ENCODE measurements at regions of chr3 and their contacts with region 1.

Region 1: GRCh38 chr3:111717601-111718000 is 122.5 kb upstream of the ZBED2 start:
- DNase-seq: peak; percentile 57 to 59
- H3K4me3 ChIP-seq: no peak overlapping the region
- H3K27ac ChIP-seq: no peak overlapping the region
- H3K4me1 ChIP-seq: no peaks in the 10 kb centered on the region
- H3K27me3 ChIP-seq: no peaks in the 10 kb centered on the region
- CTCF ChIP-seq: peak; percentile 60 to 98 (median 94)
- EP300 ChIP-seq: no peak
- POLR2A ChIP-seq: no peak
- RAD21 ChIP-seq: peak; percentile 99 to 100

Region 2: GRCh38 chr3:111691293-111691909 is 26.2 kb before region 1 on chr3:
- CTCF ChIA-PET with region 1: interaction called, 15 read pairs
- POLR2A ChIA-PET with region 1: no interaction called
- DNase-seq: no peak
- H3K4me3 ChIP-seq: no peak overlapping the region
- H3K27ac ChIP-seq: no peak overlapping the region
- H3K4me1 ChIP-seq: no peaks in the 10 kb centered on the region; a peak in 1 of 7 replicates
- H3K27me3 ChIP-seq: peaks cover 0 to 1% (median 0%) of the 10 kb centered on the region in 4 experiments; a peak in 1 of 7 replicates
- CTCF ChIP-seq: peak in 2 of 3 experiments; percentile 40 to 56; a peak in 3 of 4 replicates
- EP300 ChIP-seq: no peak
- POLR2A ChIP-seq: no peak
- RAD21 ChIP-seq: peak; percentile 66 to 75

Region 3: DNA sequence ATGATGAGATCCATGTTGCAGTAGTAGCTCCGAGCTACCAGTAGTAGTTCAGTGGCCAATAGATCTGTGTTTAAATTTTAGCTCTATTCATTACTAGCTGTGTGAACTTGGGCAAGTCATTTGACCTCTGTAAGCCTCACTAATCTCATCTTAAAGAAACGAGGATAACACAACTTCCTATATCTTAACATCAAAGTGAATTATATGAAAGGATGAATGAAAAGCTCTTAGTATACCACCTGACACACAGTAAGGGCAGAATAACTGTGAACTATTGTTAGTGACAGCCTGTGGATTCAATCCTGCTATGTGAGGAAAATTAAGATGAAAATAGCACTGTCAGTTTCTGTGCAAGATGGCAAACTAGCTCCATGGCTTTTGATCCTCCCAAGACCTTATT is 27.0 kb after region 1 on chr3:
- CTCF ChIA-PET with region 1: interaction called, 13 read pairs
- POLR2A ChIA-PET with region 1: no interaction called
- DNase-seq: no peak
- H3K4me3 ChIP-seq: no peak overlapping the region
- H3K27ac ChIP-seq: no peak overlapping the region
- H3K4me1 ChIP-seq: peaks cover 0 to 5% (median 0%) of the 10 kb centered on the region in 4 experiments; a peak in 2 of 7 replicates
- H3K27me3 ChIP-seq: no peaks in the 10 kb centered on the region
- CTCF ChIP-seq: no peak
- EP300 ChIP-seq: no peak
- POLR2A ChIP-seq: no peak
- RAD21 ChIP-seq: no peak

Region 4: DNA sequence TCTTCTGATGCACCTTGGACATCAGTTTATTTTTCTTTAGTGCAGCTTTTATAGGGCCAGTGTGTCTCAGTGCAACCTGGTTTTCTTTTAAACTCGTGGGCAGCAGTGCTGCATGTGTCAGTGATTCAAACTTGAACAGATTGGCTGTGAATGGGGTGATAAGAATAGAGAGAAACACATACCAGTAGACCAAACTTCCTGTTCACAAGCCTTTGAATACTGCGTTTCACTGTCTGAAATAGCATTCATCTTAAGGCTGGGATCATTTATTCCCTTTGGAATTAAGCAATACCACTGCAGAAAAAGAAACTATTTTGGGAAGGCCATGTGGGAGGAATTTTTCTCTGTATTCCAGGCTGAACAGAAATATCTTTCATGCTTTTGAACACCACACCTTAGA is 193.2 kb after region 1 on chr3:
- CTCF ChIA-PET with region 1: interaction called, 19 read pairs
- POLR2A ChIA-PET with region 1: no interaction called
- DNase-seq: no peak
- H3K4me3 ChIP-seq: no peak overlapping the region
- H3K27ac ChIP-seq: no peak overlapping the region
- H3K4me1 ChIP-seq: peaks cover 0 to 5% (median 2%) of the 10 kb centered on the region in 4 experiments; a peak in 3 of 7 replicates
- H3K27me3 ChIP-seq: no peaks in the 10 kb centered on the region
- CTCF ChIP-seq: no peak
- EP300 ChIP-seq: no peak
- POLR2A ChIP-seq: no peak
- RAD21 ChIP-seq: no peak

Region 5: GRCh38 chr3:111978493-111979433 is 261.2 kb after region 1 on chr3 and contains the start of gene ABHD10:
- CTCF ChIA-PET with region 1: interaction called, 258 read pairs
- POLR2A ChIA-PET with region 1: interaction called, 3 read pairs
- DNase-seq: peak; percentile 93 to 95
- H3K4me3 ChIP-seq: peak within 1 kb of the TSS; percentile 80 to 91 (median 84)
- H3K27ac ChIP-seq: peak within 1 kb of the TSS; percentile 72
- H3K4me1 ChIP-seq: no peaks in the 10 kb centered on the region
- H3K27me3 ChIP-seq: no peaks in the 10 kb centered on the region
- CTCF ChIP-seq: no peak
- EP300 ChIP-seq: no peak
- POLR2A ChIP-seq: peak; percentile 86 to 93
- RAD21 ChIP-seq: no peak
- total RNA-seq, gene ABHD10: 24.6 and 27.5 TPM in 2 replicates

Region 6: DNA sequence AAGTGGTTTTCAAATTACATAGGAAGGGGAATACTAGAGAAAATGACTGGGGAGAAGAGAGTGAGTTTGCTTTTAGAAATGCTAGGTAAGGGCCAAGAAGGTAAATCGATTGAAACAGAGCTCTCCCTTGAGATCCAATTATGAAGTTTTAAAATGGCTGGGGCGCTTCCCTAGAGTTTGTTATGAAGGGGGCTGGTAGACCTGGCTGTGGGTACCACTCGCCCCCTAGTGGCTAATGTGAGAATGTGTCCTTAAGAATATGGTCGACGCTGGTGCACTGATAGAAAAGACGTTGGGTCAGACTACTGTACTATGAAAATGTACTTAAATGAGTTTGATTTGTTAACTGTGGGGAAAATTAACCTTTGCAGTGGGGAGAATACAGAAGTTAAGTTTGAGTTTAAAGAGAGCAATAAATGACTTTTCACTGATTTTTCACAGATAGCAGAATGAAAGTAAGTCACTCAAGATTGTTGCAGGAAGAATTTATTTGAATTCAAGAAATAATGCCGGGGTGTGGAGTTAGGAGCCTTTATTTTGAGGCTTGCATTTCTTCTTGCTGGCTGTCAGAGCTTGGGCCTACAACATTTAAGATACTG is 326.1 kb after region 1 on chr3:
- CTCF ChIA-PET with region 1: interaction called, 34 read pairs
- POLR2A ChIA-PET with region 1: no interaction called
- DNase-seq: peak in 1 of 2 experiments; percentile 5
- H3K4me3 ChIP-seq: no peak overlapping the region
- H3K27ac ChIP-seq: no peak overlapping the region
- H3K4me1 ChIP-seq: peaks cover 0 to 4% (median 1%) of the 10 kb centered on the region in 4 experiments; a peak in 4 of 7 replicates
- H3K27me3 ChIP-seq: no peaks in the 10 kb centered on the region
- CTCF ChIP-seq: peak; percentile 76 to 82 (median 79)
- EP300 ChIP-seq: no peak
- POLR2A ChIP-seq: no peak
- RAD21 ChIP-seq: peak; percentile 81 to 86

Measured in H1 (cell line).